ENCODE measurements at regions of chr1 and their contacts with region 1.

Region 1: DNA sequence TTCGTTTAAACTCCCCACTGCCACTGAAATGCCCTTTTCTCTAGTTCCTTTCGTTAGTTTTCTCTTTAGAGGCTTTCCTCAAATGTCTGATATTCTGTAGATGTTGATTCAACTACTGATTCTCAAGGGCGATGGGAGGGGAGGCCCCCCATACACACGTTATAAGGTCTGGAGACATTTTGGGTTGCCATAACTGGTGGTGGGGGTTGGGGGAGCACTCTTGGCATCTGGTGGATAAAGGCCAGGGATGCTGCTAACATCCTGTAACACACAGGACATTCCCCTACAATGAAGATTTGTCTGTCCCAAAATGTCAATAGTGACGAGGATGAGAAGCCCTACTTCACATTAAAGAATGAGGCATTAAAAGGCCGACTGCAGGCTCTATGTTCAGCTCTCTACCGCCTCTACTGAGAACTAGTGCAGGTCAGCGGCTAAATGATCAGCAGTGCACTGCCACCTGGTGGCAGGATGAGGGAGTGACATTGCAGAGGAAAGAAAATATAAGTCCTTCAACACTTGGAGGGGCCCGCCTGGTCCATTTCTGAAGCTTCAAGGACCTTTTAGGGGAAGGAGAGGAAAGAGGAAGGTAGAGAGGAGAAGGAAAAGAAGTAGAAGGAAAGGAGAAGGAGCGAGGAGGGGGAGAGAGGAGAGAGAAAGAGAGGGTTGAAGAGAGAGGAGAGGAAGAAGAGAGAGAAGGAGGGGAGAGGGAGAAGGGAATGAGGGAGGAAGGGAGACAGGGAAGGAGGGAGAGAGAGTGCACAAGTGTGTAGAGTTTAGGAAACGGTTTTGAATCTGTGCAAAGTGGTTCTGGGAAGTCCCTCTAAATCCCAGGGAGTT is 29.4 kb downstream of the ALG14 start:
- ATAC-seq: peak; percentile 73 to 92 (median 88)
- H3K4me3 ChIP-seq: no peak overlapping the region
- H3K27ac ChIP-seq: no peak overlapping the region
- H3K4me1 ChIP-seq: peaks cover 0 to 3% of the 10 kb centered on the region in 2 donors

Region 2: DNA sequence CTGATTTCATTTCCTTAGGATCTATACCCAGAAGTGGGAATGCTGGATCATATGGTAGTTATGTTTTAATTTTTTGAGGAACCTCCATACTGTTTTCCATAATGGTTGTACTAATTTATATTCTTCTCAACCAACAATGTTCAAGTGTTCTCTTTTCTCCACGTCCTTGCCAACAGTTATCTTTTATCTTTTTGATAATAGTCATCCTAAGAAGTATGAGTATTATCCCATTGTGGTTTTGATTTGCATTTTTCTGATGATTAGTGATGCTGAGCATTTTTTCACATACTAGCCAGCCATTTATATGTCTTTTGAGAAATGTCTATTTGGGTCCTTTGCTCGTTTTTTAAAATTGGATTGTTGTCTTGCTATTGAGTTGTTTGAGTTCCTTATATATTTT is 586.6 kb before region 1 on chr1:
- in situ Hi-C with region 1: no loop called
- ATAC-seq: no peak
- H3K4me3 ChIP-seq: no peak overlapping the region
- H3K27ac ChIP-seq: no peak overlapping the region
- H3K4me1 ChIP-seq: no peaks in the 10 kb centered on the region

Region 3: GRCh38 chr1:94514095-94514727 is 529.1 kb before region 1 on chr1:
- in situ Hi-C with region 1: loop called in 2 of 9 experiments (anchors 25 kb)
- ATAC-seq: peak in 7 of 8 experiments; percentile 27 to 74 (median 42)
- H3K4me3 ChIP-seq: no peak overlapping the region
- H3K27ac ChIP-seq: no peak overlapping the region
- H3K4me1 ChIP-seq: no peaks in the 10 kb centered on the region

Region 4: DNA sequence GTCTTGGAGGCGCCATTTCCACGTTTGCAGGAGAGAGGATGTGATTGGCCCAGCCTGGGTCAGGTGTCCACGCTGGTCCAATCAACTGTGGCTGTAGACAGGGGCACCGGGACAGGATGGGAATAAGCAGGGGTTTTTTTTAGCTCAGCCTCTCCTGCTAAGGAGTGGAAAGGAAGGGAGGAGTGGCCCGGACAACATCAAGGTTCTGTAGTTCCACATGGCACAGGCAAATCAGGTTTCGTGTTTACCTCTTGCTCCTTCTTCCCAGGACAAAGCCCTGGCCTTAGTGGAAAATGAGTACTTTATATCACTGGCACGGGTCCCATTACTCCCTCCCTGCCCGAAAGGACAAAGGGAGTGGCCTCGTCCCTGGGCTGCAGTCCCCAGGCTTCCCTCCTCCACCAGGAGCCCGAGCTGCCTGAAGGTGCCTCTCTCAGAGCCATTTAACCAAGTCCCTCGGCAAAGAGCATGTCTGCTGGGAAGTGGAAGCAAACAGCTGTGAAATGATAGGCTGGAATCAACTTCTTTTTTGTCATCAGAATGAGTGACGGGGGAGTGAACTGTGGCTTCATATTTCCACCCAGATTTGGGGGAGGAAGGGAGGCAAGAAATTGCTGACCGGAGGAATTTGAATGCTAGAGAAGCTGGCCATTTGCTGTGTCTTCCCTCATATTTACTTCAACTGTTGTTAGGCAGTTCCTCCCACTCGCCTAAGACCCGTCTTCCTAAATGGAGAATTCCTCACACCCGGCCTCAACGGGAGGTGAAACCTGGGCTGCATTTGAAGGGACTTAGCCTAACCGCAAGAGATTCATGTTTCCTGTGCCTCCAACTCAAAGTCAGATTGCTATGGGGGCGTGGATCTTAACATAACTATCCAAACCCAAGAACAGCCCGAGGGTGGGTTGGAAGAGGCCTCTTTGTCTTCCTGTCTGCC is 308.1 kb before region 1 on chr1:
- in situ Hi-C with region 1: no loop called
- ATAC-seq: peak in 3 of 8 experiments; percentile 32 to 72 (median 70)
- H3K4me3 ChIP-seq: no peak overlapping the region
- H3K27ac ChIP-seq: no peak overlapping the region
- H3K4me1 ChIP-seq: no peaks in the 10 kb centered on the region

Region 5: DNA sequence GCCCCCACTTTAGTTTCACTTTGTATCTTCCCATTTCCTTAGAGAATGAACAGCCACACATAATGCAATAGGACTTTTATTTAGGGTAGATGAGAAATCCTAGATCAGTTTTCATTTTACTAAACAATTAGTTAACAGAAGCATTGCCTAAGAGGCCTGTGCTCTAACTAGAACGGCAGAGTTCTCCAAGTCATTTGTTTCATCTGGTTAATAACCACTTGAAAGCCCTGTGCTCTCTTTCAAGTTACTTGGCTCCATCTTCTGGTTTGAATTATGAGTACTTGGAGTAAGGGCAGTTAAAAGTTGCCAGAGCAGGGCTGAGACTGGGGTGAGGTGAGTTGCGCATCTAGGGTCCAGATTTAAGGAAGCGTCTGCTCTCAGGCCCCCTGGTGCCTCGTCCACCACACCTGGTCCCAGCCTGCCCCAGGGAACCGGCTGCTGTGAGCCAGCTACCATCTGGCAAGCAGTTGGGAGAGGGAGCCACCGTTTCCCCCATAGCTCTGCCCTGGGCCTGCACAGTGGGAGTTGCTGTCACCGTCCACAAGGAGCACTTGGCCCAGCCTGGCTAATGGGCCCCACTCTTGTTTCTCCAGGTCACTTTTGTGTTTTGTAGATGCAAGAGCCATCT is 241.3 kb before region 1 on chr1:
- in situ Hi-C with region 1: loop called in 1 of 9 experiments (anchors 25 kb)
- ATAC-seq: peak; percentile 44 to 94 (median 64)
- H3K4me3 ChIP-seq: no peak overlapping the region
- H3K27ac ChIP-seq: no peak overlapping the region
- H3K4me1 ChIP-seq: peaks cover 14 to 20% of the 10 kb centered on the region in 2 donors

Region 6: DNA sequence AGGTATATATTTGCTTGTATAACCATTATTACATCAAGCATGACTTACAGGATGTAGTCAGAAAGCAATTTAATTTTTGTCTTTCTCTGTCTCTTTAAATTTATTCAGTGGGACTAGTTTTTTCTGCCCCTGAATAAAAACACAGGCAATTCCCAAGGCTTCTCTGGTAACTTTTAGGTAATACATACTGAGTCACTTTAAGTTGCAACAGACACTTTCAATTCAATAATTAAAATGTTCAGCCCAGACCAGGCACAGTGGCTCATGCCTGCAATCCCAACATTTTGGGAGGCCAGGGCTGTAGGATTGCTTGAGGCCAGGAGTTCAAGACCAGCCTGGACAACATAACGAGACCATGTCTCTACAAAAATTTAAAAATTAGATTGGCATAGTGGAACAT is 210.9 kb before region 1 on chr1:
- in situ Hi-C with region 1: loop called in 1 of 9 experiments (anchors 25 kb)
- ATAC-seq: peak in 1 of 8 experiments; percentile 23
- H3K4me3 ChIP-seq: no peak overlapping the region
- H3K27ac ChIP-seq: no peak overlapping the region
- H3K4me1 ChIP-seq: peaks cover 0 to 9% of the 10 kb centered on the region in 2 donors

Region 7: GRCh38 chr1:94854458-94855306 is 188.7 kb before region 1 on chr1:
- in situ Hi-C with region 1: loop called in 7 of 9 experiments (anchors 10 to 25 kb)
- ATAC-seq: peak; percentile 90 to 99 (median 94)
- H3K4me3 ChIP-seq: peak overlapping the region in 1 of 5 donors; percentile 8
- H3K27ac ChIP-seq: no peak overlapping the region
- H3K4me1 ChIP-seq: peaks cover 3 to 14% of the 10 kb centered on the region in 2 donors

Region 8: GRCh38 chr1:94926915-94927404 is 116.4 kb before region 1 on chr1 and contains the start of gene CNN3:
- in situ Hi-C with region 1: loop called in 1 of 9 experiments (anchors 25 kb)
- ATAC-seq: peak; percentile 79 to 90 (median 88)
- H3K4me3 ChIP-seq: peak within 1 kb of the TSS; percentile 68 to 97 (median 82)
- H3K27ac ChIP-seq: peak within 1 kb of the TSS; percentile 82 to 84
- H3K4me1 ChIP-seq: peaks cover 31 to 38% of the 10 kb centered on the region in 2 donors
- total RNA-seq, gene CNN3: 48.0 to 479 (median 171) TPM

Region 9: DNA sequence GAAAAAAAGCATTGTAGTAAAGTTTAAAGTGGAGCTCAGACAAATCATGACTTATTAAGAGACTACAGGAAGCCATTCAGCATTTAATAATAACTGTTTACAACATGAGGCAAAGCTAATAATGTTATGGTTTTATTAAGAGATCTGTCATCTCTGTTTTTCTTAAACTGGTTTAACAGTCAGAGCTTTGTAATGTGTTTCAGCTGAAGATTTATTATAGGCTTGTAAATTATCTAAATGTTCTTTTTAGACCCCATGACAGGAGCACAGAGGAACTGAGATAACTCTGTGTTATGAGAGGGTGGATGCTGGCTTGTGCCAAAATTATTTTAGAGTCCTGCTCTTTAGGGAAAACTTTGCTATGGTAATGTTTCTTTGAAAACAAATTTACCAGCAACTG is 152.7 kb after region 1 on chr1:
- in situ Hi-C with region 1: no loop called
- ATAC-seq: no peak
- H3K4me3 ChIP-seq: no peak overlapping the region
- H3K27ac ChIP-seq: no peak overlapping the region
- H3K4me1 ChIP-seq: no peaks in the 10 kb centered on the region